Activated CD4-positive, alpha-beta memory T cell treated with anti-CD3 and anti-CD28 coated beads, Interleukin-2, amount 10 ng/mL, durations not matched to agents 7 days and 5 days (primary cell): ENCODE measurements at regions of chr13 and their contacts with region 1.

Region 1: DNA sequence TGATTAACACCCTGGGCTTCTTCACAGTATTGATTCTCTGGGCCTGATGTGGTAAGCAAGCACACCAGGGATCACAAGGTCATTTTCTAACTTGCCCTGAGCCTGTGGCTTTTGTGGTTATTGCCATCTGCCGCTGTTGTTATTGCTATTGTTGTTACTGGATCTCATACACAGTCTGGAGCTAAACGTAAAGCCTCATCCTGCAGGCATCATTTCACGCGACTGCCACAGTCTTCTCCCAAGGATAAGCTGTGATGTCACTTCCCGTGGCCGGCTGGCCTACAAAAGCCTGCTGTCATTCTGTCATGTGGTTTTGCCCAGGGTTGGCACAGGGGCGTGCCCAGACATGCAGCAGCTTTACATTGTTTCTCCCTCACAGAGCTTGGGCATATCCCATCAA is 154.0 kb upstream of the GPR12 start:
- DNase-seq: peak; percentile 34
- H3K4me3 Mint-ChIP-seq: no peak overlapping the region
- H3K27ac Mint-ChIP-seq: no peak overlapping the region
- H3K4me1 Mint-ChIP-seq: peaks cover 7% of the 10 kb centered on the region
- H3K27me3 Mint-ChIP-seq: peaks cover 16% of the 10 kb centered on the region

Region 2: GRCh38 chr13:26819046-26819445 is 95.6 kb before region 1 on chr13:
- CTCF ChIA-PET with region 1: no interaction called
- POLR2A ChIA-PET with region 1: no interaction called
- DNase-seq: no peak
- H3K4me3 Mint-ChIP-seq: no peak overlapping the region
- H3K27ac Mint-ChIP-seq: no peak overlapping the region
- H3K4me1 Mint-ChIP-seq: no peaks in the 10 kb centered on the region
- H3K27me3 Mint-ChIP-seq: peaks cover 4% of the 10 kb centered on the region

Region 3: DNA sequence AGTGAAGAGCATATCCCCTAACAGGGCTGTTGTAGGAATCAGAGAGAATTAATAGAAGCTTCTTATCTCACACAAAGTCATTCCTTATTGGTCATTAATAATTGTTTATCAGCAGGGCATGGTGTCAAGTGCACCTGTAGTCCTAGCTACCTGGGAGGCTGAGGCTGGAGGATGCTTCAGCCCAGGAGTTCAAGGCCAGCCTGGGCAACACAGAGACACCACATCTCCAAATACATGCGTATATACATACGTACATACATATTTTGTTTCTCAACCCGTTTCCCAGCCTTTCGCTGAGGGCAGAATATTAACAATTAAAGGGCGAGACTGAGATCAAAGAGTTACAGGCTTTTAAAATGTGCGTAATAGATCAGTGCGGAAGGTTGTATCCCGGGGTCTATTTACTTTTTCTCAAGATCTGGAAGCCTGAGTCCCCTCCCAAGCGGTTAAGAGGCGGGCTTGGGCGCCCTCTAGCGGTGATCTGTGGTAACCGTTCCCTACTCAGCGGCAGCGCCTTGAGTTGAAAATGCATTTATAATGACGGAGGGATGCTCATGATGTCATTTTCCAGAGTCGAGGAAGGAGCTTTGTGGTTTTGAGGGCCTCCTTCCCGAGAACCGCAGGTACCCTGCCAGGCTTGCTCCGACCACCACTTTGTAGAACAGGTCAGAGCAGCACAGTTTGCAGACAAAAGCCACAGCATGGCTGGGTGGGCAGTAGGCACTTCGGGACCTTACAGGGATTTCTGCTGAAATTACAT is 15.5 kb after region 1 on chr13:
- CTCF ChIA-PET with region 1: interaction called, 15 read pairs
- POLR2A ChIA-PET with region 1: no interaction called
- DNase-seq: peak; percentile 65
- H3K4me3 Mint-ChIP-seq: no peak overlapping the region
- H3K27ac Mint-ChIP-seq: no peak overlapping the region
- H3K4me1 Mint-ChIP-seq: peaks cover 4% of the 10 kb centered on the region
- H3K27me3 Mint-ChIP-seq: peaks cover 9% of the 10 kb centered on the region